PC-9 (cell line): ENCODE measurements at regions of chr10 and their contacts with region 1.

Region 1: GRCh38 chr10:119080521-119081260 is at the start of gene EIF3A:
- DNase-seq: peak; percentile 69 to 87
- H3K4me3 ChIP-seq: peak within 1 kb of the TSS; percentile 84
- H3K27ac ChIP-seq: peak within 1 kb of the TSS; percentile 78
- H3K4me1 ChIP-seq: peaks cover 10% of the 10 kb centered on the region
- H3K27me3 ChIP-seq: no peaks in the 10 kb centered on the region
- CTCF ChIP-seq: no peak
- total RNA-seq, gene EIF3A: 85.5 and 102 TPM in 2 replicates

Region 2: DNA sequence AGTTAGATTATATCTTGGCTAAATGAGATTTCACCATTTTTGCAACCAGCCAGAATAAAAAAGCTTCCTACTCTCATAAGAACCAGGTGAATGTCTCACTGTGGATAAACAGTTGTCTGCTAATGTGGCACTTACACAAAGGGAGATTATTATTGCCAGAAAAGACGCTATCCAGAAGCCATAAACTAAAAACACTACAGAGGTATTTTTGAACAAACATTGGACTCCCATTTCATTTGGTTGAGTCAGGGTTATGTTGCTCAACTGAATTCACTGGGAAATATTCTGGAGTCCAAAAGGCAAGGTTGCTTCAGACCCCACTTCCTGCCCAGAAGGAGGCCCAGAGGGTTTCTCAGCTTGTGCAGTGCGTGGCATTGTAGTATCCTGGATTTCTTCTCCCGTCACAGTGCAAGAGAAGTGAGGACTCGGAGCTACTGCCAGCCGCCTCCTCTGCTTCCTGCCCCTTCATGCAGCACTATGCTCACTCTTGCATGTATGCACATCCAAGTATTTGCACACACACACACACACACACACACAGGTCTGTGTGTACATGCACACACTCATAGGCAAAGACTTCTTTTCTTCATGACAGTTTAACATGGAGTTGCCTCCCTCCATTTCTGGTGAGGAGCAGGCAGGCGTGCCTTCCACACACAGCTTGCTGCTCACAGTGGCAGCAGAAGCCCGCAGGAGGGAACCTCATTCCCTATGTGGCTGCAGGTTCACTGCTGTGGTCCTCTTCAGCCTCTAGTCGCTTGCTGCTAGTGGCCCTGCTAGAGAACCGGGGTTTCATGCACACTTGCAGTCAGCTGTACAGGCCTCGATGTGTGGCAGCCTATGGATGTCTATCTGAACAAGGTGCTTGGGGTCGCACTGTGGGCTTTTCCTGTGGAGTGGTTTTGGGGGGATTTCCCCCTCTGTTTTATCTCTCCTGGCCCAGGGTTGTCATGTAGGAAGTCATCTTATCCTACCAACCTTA is 33.4 kb after region 1 on chr10:
- CTCF ChIA-PET with region 1: interaction called, 3 read pairs
- POLR2A ChIA-PET with region 1: no interaction called
- intact Hi-C with region 1: loop called (anchors 5 kb)
- DNase-seq: peak in 1 of 2 experiments; percentile 93
- H3K4me3 ChIP-seq: peak overlapping the region; percentile 2; the same call in 1 of the 2 replicates
- H3K27ac ChIP-seq: peak overlapping the region; percentile 95
- H3K4me1 ChIP-seq: peaks cover 34% of the 10 kb centered on the region
- H3K27me3 ChIP-seq: no peaks in the 10 kb centered on the region
- CTCF ChIP-seq: no peak